Spleen (tissue), 13 donors: ENCODE measurements at regions of chr15 and their contacts with region 1.

Region 1: DNA sequence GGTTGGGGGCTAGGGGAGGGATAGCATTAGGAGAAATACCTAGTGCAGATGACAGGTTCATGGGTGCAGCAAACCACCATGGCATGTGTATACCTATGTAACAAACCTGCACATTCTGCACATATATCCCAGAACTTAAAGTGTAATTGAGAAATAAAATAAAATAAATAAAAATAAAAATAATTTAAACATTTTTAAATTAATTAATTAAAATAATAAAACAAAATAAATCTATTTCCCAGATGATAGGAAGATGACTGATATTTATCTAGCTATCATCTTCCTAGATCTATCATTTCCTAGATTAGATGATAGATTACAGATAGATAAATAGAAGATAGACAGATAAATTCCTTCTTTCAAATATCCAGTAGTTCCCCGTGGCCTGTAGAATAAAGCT is 137.3 kb downstream of the OCA2 start:
- DNase-seq: no peak
- H3K4me3 ChIP-seq: no peak overlapping the region
- H3K27ac ChIP-seq: no peak overlapping the region
- H3K4me1 ChIP-seq: peaks cover 0 to 3% (median 0%) of the 10 kb centered on the region in 6 donors
- H3K27me3 ChIP-seq: no peaks in the 10 kb centered on the region
- CTCF ChIP-seq: no peak
- POLR2A ChIP-seq: no peak

Region 2: GRCh38 chr15:27912283-27912682 is 49.5 kb before region 1 on chr15:
- intact Hi-C with region 1: loop called (anchors 5 kb)
- DNase-seq: no peak
- H3K4me3 ChIP-seq: no peak overlapping the region
- H3K27ac ChIP-seq: no peak overlapping the region
- H3K4me1 ChIP-seq: no peaks in the 10 kb centered on the region
- H3K27me3 ChIP-seq: no peaks in the 10 kb centered on the region
- CTCF ChIP-seq: no peak
- POLR2A ChIP-seq: no peak

Region 3: DNA sequence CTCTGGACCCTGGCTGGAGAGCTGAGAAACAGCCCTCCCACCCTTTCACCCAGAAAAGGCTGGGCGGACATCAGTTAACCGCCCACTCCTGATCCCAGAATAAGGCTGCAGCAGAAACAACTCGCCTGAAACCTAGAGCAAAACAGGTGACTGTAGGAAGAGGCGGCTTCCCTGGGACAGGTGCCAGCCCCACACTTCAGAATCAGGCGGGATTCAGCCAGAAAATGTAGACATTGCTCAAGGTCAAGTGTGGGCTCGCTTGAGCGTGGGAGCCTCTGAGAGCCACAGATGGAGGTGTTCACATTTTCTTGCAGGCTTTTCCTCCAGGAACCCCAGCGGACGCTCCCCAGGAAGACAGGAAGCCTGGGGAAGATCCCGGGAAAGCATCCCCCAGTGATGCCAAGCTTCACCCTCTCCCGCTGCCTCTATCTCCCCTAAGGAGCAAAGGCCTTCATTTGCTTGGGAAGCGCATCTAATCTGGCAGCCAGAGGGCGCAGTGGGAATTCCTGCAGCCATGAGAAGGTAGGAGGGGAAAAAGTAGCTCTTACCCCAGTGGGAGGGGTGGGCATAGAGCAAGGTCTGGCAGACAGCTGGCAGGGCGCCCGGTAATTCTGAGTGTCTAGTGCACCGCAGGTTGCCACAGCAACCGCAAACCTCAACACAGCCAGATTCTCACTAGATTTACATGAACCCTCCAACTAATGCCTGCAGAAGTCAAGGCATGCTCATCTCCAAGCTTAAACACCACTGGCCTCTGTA is 59.7 kb after region 1 on chr15:
- intact Hi-C with region 1: no loop called
- DNase-seq: no peak
- H3K4me3 ChIP-seq: no peak overlapping the region
- H3K27ac ChIP-seq: no peak overlapping the region
- H3K4me1 ChIP-seq: peaks cover 0 to 7% (median 0%) of the 10 kb centered on the region in 6 donors
- H3K27me3 ChIP-seq: no peaks in the 10 kb centered on the region
- CTCF ChIP-seq: peak in 5 of 11 experiments; percentile 10 to 53 (median 45)
- POLR2A ChIP-seq: no peak